Mammary epithelial cell (primary cell): ENCODE measurements at regions of chr1 and their contacts with region 1.

Region 1: GRCh38 chr1:36099681-36100341 is 11.1 kb downstream of the ADPRS start:
- DNase-seq: peak; percentile 49
- H3K4me3 ChIP-seq: no peak overlapping the region
- H3K27ac ChIP-seq: no peak overlapping the region
- H3K4me1 ChIP-seq: peaks cover 4% of the 10 kb centered on the region
- H3K27me3 ChIP-seq: no peaks in the 10 kb centered on the region
- CTCF ChIP-seq: peak; percentile 86 to 96

Region 2: GRCh38 chr1:36134505-36135329 is 34.9 kb after region 1 on chr1:
- CTCF ChIA-PET with region 1: interaction called, 21 read pairs
- dilution Hi-C with region 1: no loop called
- in situ Hi-C with region 1: no loop called
- intact Hi-C with region 1: loop called (anchors 1 kb)
- DNase-seq: peak; percentile 91
- H3K4me3 ChIP-seq: no peak overlapping the region
- H3K27ac ChIP-seq: peak overlapping the region; percentile 79
- H3K4me1 ChIP-seq: peaks cover 41% of the 10 kb centered on the region
- H3K27me3 ChIP-seq: no peaks in the 10 kb centered on the region
- CTCF ChIP-seq: peak; percentile 62 to 64

Region 3: GRCh38 chr1:36217670-36218069 is 117.9 kb after region 1 on chr1:
- CTCF ChIA-PET with region 1: no interaction called
- dilution Hi-C with region 1: no loop called
- in situ Hi-C with region 1: no loop called
- intact Hi-C with region 1: loop called (anchors 1 kb)
- DNase-seq: peak; percentile 27
- H3K4me3 ChIP-seq: no peak overlapping the region
- H3K27ac ChIP-seq: no peak overlapping the region
- H3K4me1 ChIP-seq: peaks cover under 1% of the 10 kb centered on the region
- H3K27me3 ChIP-seq: no peaks in the 10 kb centered on the region
- CTCF ChIP-seq: peak in 1 of 2 donors; percentile 44

Region 4: GRCh38 chr1:36369061-36369861 is 269.4 kb after region 1 on chr1:
- CTCF ChIA-PET with region 1: no interaction called
- dilution Hi-C with region 1: no loop called
- in situ Hi-C with region 1: no loop called
- intact Hi-C with region 1: loop called (anchors 2 kb)
- DNase-seq: peak; percentile 50
- H3K4me3 ChIP-seq: no peak overlapping the region
- H3K27ac ChIP-seq: no peak overlapping the region
- H3K4me1 ChIP-seq: peaks cover 24% of the 10 kb centered on the region
- H3K27me3 ChIP-seq: no peaks in the 10 kb centered on the region
- CTCF ChIP-seq: peak; percentile 85 to 90